PC-3 (cell line): ENCODE measurements at regions of chr20 and their contacts with region 1.

Region 1: GRCh38 chr20:34876162-34877001 is at the start of gene ACSS2:
- DNase-seq: peak; percentile 98
- ATAC-seq: peak; percentile 85
- H3K4me3 ChIP-seq: peak within 1 kb of the TSS; percentile 84
- H3K27ac ChIP-seq: peak within 1 kb of the TSS; percentile 52
- H3K4me1 ChIP-seq: peaks cover 20% of the 10 kb centered on the region
- H3K27me3 ChIP-seq: no peaks in the 10 kb centered on the region
- CTCF ChIP-seq: no peak
- total RNA-seq, gene ACSS2: 78.9 and 125 TPM in 2 replicates

Region 2: DNA sequence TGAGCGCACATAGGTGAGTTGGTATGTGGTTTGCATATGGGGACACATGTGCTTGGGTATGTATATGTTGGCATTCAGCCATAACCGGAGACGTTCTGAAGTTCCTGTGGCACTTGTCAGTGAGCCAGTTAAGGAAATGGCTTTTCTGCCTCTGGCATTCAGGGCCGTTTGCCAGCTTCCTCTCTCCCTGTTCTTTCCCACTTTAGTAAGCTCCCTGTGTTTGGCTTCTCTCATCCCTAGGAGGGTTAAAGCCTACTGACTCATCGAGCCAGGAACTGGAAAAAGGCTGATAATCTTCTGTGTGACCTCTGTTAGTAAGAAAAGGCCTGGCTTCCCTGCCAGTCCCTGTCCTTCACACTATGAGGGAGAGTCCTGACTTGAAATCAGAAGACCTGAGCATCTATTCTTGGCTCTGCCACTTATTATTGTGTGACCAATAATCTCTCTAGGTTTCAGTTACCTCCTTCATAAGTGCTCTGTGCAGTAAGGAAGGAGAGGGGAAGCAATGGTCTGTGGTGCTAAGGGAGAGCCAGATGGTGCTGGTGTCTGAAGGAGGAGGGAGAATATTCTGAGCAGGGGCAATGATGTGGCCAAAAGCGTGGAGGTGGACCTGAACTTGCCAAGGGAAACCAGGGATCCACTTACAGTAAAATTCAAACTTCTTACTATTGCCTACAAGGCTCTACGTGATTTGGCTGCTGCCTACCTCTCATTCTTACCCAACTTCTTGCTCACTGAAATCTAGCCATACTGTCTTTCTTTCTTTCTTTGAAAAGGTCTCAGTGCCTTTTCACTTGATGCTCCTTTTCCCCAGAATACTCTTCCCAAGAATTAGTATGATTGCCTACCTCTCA is 31.5 kb after region 1 on chr20:
- CTCF ChIA-PET with region 1: interaction called, 4 read pairs
- POLR2A ChIA-PET with region 1: interaction called, 9 read pairs
- intact Hi-C with region 1: loop called (anchors 1 kb)
- DNase-seq: peak; percentile 100
- ATAC-seq: peak; percentile 99
- H3K4me3 ChIP-seq: no peak overlapping the region
- H3K27ac ChIP-seq: peak overlapping the region; percentile 94
- H3K4me1 ChIP-seq: peaks cover 23% of the 10 kb centered on the region
- H3K27me3 ChIP-seq: no peaks in the 10 kb centered on the region
- CTCF ChIP-seq: no peak

Region 3: GRCh38 chr20:34948030-34948429 is 71.6 kb after region 1 on chr20:
- CTCF ChIA-PET with region 1: interaction called, 14 read pairs
- POLR2A ChIA-PET with region 1: no interaction called
- intact Hi-C with region 1: no loop called
- DNase-seq: peak; percentile 58
- ATAC-seq: peak; percentile 47
- H3K4me3 ChIP-seq: no peak overlapping the region
- H3K27ac ChIP-seq: no peak overlapping the region
- H3K4me1 ChIP-seq: peaks cover 45% of the 10 kb centered on the region
- H3K27me3 ChIP-seq: no peaks in the 10 kb centered on the region
- CTCF ChIP-seq: peak; percentile 24

Region 4: DNA sequence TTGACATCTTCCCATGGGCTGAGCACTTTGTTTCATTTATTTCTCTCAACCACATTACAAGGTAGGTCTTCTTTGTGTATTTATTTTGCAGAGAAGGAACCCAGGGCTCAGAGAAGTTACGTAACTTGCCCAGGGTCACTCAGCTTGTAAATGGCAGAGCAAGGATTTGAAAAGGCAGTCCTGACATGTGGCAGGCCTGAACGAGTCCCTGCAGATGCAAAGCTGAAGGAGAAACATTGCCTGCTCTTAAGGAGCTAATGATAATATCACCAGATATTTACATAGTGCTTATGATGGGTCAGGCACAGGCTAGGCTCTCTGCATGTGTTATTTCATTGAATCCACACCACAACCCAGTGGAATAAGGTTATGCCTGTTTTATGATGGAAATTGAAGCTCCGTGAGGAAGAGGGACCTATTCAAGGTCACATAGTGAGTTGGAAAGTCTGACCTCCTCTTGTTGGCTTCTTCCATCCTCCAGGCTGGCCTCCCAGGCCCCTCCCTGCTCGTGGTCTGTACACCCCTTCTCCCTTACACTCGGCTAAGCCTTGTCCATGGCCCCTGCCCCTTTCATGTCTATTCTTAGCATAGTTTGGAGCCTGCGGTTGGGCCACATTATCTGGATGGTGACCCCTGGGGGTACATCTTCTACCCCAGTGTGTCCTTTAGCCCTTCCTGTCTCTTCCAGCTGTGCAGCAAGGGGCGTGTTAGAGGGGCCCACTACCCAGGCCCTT is 91.8 kb after region 1 on chr20:
- CTCF ChIA-PET with region 1: no interaction called
- POLR2A ChIA-PET with region 1: no interaction called
- intact Hi-C with region 1: no loop called
- DNase-seq: no peak
- ATAC-seq: no peak
- H3K4me3 ChIP-seq: no peak overlapping the region
- H3K27ac ChIP-seq: no peak overlapping the region
- H3K4me1 ChIP-seq: no peaks in the 10 kb centered on the region
- H3K27me3 ChIP-seq: no peaks in the 10 kb centered on the region
- CTCF ChIP-seq: no peak

Region 5: DNA sequence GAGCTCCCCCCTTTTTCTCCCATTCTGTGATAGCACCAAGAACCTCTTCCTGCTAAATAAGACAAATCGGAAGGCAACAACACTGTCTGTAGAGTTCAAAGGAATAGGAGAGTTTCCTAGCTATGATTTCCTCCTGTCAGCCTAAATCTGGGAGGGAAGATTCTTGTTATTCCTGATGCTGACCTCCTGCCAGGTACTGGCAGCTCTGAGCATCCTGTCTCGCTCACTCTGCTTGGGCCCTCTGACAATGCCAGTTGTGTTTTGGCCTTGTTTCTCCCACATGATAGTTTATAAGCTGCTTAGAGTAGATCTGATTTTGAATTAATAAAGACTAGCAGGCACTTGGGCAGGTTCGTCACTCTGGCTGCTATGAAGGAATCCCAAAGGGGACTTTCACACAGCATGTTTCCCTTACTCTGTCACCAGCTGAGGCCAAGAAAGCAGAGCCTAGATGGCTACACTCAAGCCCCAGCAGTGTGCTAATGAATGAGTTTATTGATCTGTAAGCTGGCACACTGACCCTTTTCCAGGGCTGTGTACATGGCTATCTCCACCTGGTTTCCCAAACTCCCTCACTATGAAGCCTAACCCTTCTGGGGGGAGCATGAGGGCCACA is 483.1 kb after region 1 on chr20:
- CTCF ChIA-PET with region 1: no interaction called
- POLR2A ChIA-PET with region 1: interaction called, 11 read pairs
- intact Hi-C with region 1: no loop called
- DNase-seq: peak; percentile 10
- ATAC-seq: peak; percentile 21
- H3K4me3 ChIP-seq: no peak overlapping the region
- H3K27ac ChIP-seq: no peak overlapping the region
- H3K4me1 ChIP-seq: peaks cover 33% of the 10 kb centered on the region
- H3K27me3 ChIP-seq: no peaks in the 10 kb centered on the region
- CTCF ChIP-seq: no peak